ENCODE measurements at regions of chr1 and their contacts with region 1.

Region 1: GRCh38 chr1:64393790-64394189 is 76.1 kb upstream of the CACHD1 start:
- DNase-seq: no peak
- H3K4me3 ChIP-seq: no peak overlapping the region
- H3K27ac ChIP-seq: no peak overlapping the region
- H3K4me1 ChIP-seq: no peaks in the 10 kb centered on the region
- H3K27me3 ChIP-seq: no peaks in the 10 kb centered on the region
- CTCF ChIP-seq: no peak

Region 2: GRCh38 chr1:63799307-63799706 is 594.5 kb before region 1 on chr1:
- CTCF ChIA-PET with region 1: no interaction called
- POLR2A ChIA-PET with region 1: interaction called, 15 read pairs
- intact Hi-C with region 1: no loop called
- DNase-seq: no peak
- H3K4me3 ChIP-seq: no peak overlapping the region
- H3K27ac ChIP-seq: no peak overlapping the region
- H3K4me1 ChIP-seq: no peaks in the 10 kb centered on the region
- H3K27me3 ChIP-seq: no peaks in the 10 kb centered on the region
- CTCF ChIP-seq: no peak